Calu3 (cell line): ENCODE measurements at regions of chr7 and their contacts with region 1.

Region 1: DNA sequence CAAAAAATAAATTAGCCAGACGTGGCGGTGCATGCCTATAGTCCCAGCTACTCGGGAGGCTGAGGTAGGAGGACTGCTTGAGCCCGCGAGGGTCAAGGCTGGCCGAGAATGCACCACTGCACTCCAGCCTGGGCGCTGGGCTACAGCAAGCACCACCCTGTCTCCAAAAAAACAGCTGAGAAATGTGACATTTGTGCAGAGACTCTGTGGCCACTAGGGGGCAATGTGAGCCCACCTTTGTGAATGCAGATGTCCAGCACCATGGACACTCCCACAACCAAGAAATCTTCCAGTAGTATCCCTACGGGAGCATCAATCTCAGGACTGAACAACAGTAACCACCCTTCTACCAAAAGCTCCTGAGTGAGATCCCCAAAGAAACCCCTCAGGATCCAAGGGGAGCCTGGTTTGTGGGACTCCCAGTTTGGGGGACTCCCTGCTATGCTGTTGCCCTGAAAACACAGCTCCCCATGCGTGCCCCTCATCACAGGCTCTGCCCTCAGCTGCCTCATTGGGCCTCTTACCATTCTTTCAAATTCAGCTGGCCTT is 6.2 kb upstream of the AHCYL2 start:
- DNase-seq: peak; percentile 86
- H3K4me3 Mint-ChIP-seq: no peak overlapping the region
- H3K27ac Mint-ChIP-seq: no peak overlapping the region
- H3K4me1 Mint-ChIP-seq: peaks cover 7% of the 10 kb centered on the region
- H3K27me3 Mint-ChIP-seq: peaks cover 15% of the 10 kb centered on the region
- CTCF ChIP-seq: peak; percentile 89

Region 2: DNA sequence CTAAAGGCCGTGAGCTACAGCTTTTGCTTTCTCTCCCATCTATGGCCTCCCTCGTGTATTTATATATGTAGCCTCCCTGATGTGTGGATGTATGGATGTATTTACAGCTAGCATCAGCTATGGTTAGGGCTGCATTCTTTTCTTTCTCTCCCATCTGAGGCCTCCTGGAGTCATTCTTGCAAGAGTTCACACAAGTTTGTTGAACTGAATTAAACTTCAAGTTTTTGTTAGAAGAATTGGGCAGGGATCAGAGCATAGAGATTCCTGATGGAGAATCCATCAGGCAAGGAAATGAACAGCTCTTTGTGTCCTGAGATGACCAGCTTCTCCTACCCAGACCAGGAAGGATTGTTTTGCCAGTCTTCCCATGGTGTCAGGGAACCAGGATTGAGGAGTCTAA is 66.5 kb after region 1 on chr7:
- CTCF ChIA-PET with region 1: interaction called, 3 read pairs
- intact Hi-C with region 1: loop called (anchors 1 kb)
- DNase-seq: no peak
- H3K4me3 Mint-ChIP-seq: no peak overlapping the region
- H3K27ac Mint-ChIP-seq: no peak overlapping the region
- H3K4me1 Mint-ChIP-seq: peaks cover 27% of the 10 kb centered on the region
- H3K27me3 Mint-ChIP-seq: no peaks in the 10 kb centered on the region
- CTCF ChIP-seq: no peak

Region 3: GRCh38 chr7:129298268-129298893 is 79.8 kb after region 1 on chr7:
- CTCF ChIA-PET with region 1: interaction called, 19 read pairs
- intact Hi-C with region 1: loop called (anchors 1 kb)
- DNase-seq: peak; percentile 55
- H3K4me3 Mint-ChIP-seq: no peak overlapping the region
- H3K27ac Mint-ChIP-seq: no peak overlapping the region
- H3K4me1 Mint-ChIP-seq: peaks cover 10% of the 10 kb centered on the region
- H3K27me3 Mint-ChIP-seq: no peaks in the 10 kb centered on the region
- CTCF ChIP-seq: peak; percentile 74

Region 4: GRCh38 chr7:129468087-129468486 is 249.5 kb after region 1 on chr7:
- CTCF ChIA-PET with region 1: no interaction called
- intact Hi-C with region 1: loop called (anchors 1 kb)
- DNase-seq: no peak
- H3K4me3 Mint-ChIP-seq: no peak overlapping the region
- H3K27ac Mint-ChIP-seq: no peak overlapping the region
- H3K4me1 Mint-ChIP-seq: no peaks in the 10 kb centered on the region
- H3K27me3 Mint-ChIP-seq: no peaks in the 10 kb centered on the region
- CTCF ChIP-seq: no peak

Region 5: DNA sequence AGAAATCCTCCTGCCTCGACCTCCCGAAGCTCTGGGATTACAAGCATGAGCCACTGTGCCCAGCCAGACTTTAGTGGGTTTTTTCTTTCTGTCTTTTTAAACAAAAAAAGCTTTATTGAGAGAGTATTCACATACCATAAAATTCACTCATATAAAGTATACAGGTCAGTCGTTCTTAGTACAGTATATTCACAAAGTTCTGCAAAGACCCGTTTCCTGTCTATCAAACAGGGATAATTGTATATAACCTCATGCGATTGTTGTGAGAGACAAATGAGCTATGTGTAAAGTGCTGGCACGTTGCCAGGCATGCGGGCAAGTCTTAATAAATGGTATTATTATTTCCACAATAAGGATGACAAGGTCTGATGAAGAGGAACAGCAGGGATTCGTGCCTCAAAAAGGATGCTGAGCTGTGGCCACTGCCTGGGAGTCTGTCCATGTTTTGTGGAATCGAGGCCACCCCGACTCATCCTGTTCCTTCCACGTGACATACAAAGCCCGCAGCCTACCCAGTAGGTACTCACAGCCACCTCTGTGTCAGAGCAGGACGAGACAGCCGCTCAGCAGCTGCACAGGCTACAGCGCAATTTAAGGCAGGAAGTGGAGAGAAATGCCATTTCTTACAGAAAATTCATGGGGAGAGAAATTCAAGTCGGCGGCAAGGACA is 335.4 kb after region 1 on chr7:
- CTCF ChIA-PET with region 1: no interaction called
- intact Hi-C with region 1: no loop called
- DNase-seq: no peak
- H3K4me3 Mint-ChIP-seq: no peak overlapping the region
- H3K27ac Mint-ChIP-seq: no peak overlapping the region
- H3K4me1 Mint-ChIP-seq: no peaks in the 10 kb centered on the region
- H3K27me3 Mint-ChIP-seq: peaks cover 21% of the 10 kb centered on the region
- CTCF ChIP-seq: no peak